HEK293 (cell line): ENCODE measurements at regions of chr7 and their contacts with region 1.

Region 1: DNA sequence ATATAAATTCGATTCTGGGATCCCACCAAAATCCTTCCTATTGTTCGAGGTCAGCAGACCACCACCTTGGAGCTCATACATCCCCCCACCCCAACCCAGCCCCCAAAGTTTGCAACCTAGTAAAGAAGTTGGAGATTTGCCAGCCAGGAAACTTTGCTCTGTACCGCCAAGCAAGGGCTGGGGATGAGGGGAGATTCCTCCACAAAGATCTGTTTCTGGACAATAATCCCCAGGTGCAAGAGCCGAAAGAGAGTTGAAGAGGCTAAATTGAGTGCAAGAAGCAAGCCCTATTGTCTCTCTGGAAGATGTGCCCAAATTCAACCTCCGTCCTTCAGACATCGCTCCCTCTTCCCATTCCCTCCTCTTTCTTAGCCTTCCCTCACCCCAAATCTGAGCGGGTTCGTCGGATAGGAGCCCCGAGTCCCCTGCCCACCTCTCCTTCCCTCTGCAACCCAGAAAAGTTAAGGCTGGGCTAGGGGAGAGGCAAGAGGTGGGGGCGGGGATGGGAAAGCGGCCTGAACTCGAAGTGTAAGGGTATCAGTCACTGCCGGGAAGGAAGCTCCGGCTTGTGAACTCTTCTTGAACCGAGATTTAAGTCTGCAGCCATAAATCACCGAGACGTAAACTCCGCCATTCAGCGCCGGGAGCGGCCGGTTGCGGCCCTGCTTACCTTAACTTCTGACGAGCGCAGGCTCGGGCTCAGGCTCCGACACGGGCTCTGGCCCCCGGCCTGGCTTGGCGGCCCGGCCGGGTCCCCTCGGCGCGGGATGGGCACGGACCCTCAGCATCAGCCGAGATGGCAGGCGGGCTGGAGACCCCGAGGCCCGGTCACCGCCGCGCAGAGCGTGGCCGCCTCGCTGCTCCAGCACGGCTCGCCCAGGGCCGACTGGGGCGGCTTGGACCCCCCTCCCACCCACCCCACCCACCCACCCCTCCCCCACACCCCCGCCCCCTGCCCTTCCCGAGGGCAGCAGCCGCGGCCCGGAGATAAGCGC is 10.8 kb upstream of the HOXA2 start:
- H3K4me3 ChIP-seq: peak overlapping the region; percentile 70
- H3K27ac ChIP-seq: peak overlapping the region; percentile 99
- H3K4me1 ChIP-seq: peaks cover 26% of the 10 kb centered on the region
- CTCF ChIP-seq: no peak

Region 2: GRCh38 chr7:26853788-26854393 is 259.4 kb before region 1 on chr7:
- CTCF ChIA-PET with region 1: interaction called, 14 read pairs
- POLR2A ChIA-PET with region 1: interaction called, 5 read pairs
- H3K4me3 ChIP-seq: no peak overlapping the region
- H3K27ac ChIP-seq: no peak overlapping the region
- H3K4me1 ChIP-seq: peaks cover 42% of the 10 kb centered on the region
- CTCF ChIP-seq: no peak

Region 3: DNA sequence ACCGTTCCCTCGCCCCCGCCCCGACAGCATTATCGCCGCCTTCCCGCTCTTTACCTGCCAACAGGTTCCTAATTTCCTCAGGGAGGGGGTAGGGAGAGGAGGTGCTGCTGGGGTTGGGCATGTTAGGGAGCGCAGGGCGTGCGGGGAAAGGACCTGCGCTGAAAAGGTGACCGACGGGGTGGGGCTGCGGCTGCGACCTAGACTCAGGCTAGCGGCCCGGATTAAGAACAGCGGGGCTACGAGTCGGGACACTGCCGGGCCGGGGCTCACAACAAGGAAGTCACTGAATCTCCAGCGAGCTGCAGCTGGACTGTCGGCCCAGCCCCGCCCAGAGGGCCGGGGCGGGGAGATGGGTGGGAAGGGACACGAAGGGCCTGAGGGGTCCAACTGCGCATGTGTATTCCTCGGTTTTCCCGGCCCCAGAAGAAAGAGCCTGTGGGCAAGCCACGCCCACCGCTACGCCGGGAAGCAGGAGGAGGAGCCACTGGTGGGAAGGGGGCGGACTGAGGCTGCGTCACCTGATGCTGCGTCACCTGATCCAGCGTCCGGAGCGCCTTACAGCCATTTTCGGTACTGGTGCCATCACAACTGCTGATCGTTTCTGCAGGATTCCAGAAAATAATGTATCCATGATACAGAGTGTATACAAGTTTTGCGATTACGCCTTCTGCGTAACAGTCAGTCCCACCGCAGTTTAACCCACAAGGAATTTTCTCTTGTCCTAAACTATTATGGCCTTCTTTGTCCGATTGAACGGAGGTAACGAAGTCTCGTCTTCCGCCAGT is 248.8 kb before region 1 on chr7 and contains the start of gene SKAP2:
- CTCF ChIA-PET with region 1: interaction called, 5 read pairs
- POLR2A ChIA-PET with region 1: interaction called, 14 read pairs
- H3K4me3 ChIP-seq: peak within 1 kb of the TSS; percentile 89
- H3K27ac ChIP-seq: peak within 1 kb of the TSS; percentile 94
- H3K4me1 ChIP-seq: peaks cover 17% of the 10 kb centered on the region
- CTCF ChIP-seq: no peak

Region 4: DNA sequence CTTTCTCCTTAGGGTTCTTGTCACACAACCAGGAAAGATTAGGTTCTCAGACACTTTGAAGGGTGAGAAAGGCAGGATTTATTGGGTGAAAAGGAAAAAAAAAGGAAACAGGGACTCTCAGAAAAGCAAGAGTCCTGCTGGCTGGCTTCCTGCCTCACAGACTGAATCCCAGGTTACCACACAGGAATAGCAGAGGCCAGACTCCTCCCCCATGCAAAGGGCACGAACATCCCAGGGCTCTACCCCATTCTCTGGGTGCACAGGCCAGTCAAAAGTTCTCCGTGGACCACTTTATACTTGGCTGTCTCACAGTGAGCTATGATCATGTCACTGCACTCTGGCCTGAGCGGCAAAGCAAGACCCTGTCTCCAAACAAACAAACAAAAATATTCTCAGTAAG is 60.1 kb before region 1 on chr7:
- CTCF ChIA-PET with region 1: no interaction called
- POLR2A ChIA-PET with region 1: no interaction called
- H3K4me3 ChIP-seq: no peak overlapping the region
- H3K27ac ChIP-seq: no peak overlapping the region
- H3K4me1 ChIP-seq: 0 out of 2 replicates have a peak, but pooled peaks cover 3% of the 10 kb centered on the region
- CTCF ChIP-seq: no peak

Region 5: DNA sequence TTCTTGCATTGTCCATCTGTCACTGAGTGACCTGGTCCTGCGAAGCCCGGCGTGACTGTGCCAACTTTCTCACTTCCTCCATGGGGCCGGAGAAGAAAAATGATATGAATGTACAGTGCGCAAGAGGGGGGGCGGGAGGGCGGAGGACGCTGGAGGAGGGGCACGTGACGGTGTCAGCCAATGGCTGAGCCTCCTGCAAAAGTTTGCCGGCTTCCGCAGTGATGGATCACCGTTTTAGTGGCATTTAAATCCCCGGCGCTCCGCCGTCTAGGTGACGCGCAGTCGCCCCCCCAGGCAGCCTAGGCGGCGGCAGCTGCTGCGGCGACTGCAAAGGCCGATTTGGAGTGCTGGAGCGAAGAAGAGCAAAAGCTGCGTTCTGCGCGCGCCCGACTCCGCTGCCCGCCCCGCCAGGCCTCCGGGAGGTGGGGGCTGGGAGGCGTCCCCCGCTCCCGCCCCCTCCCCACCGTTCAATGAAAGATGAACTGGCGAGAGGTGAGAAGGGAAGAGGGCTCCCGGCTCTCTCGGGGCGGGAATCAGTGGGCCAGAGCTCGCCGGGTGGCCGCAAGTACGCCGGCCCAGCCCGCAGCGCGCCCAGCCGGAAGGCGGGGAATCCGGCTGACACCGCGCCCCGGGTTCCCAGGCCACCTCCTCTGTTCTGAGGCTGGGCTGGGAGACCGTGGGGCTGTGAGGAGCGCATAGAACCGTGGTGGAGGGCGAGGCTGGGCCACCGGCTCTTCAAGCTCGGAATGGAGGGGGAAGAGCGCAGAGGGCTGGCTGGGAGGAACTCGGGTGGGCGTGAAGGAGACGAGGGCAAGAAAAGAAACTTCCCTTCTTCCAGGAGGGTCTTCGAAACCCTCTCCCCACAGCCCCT is 17.1 kb before region 1 on chr7 and contains the start of gene HOXA1:
- CTCF ChIA-PET with region 1: interaction called, 4 read pairs
- POLR2A ChIA-PET with region 1: interaction called, 32 read pairs
- H3K4me3 ChIP-seq: peak within 1 kb of the TSS; percentile 79
- H3K27ac ChIP-seq: peak within 1 kb of the TSS; percentile 98
- H3K4me1 ChIP-seq: peaks cover 40% of the 10 kb centered on the region
- CTCF ChIP-seq: 0 out of 2 replicates have a peak, but pooled peaks have one; percentile 15

Region 6: GRCh38 chr7:27130540-27131389 is 17.5 kb after region 1 on chr7 and contains the start of gene HOXA4:
- CTCF ChIA-PET with region 1: interaction called, 6 read pairs
- POLR2A ChIA-PET with region 1: interaction called, 29 read pairs
- H3K4me3 ChIP-seq: peak within 1 kb of the TSS; percentile 52
- H3K27ac ChIP-seq: peak within 1 kb of the TSS; percentile 100
- H3K4me1 ChIP-seq: peaks cover 78% of the 10 kb centered on the region
- CTCF ChIP-seq: no peak; the same call in 1 of the 2 replicates

Region 7: GRCh38 chr7:27150568-27151340 is 37.5 kb after region 1 on chr7:
- CTCF ChIA-PET with region 1: no interaction called
- POLR2A ChIA-PET with region 1: interaction called, 25 read pairs
- H3K4me3 ChIP-seq: peak overlapping the region; percentile 59
- H3K27ac ChIP-seq: peak overlapping the region; percentile 99
- H3K4me1 ChIP-seq: peaks cover 11% of the 10 kb centered on the region
- CTCF ChIP-seq: peak; percentile 87